Activated naive CD8-positive, alpha-beta T cell treated with anti-CD3 and anti-CD28 coated beads, Interleukin-2, amount 10 ng/mL, durations not matched to agents 7 days and 5 days (primary cell): ENCODE measurements at regions of chr12 and their contacts with region 1.

Region 1: DNA sequence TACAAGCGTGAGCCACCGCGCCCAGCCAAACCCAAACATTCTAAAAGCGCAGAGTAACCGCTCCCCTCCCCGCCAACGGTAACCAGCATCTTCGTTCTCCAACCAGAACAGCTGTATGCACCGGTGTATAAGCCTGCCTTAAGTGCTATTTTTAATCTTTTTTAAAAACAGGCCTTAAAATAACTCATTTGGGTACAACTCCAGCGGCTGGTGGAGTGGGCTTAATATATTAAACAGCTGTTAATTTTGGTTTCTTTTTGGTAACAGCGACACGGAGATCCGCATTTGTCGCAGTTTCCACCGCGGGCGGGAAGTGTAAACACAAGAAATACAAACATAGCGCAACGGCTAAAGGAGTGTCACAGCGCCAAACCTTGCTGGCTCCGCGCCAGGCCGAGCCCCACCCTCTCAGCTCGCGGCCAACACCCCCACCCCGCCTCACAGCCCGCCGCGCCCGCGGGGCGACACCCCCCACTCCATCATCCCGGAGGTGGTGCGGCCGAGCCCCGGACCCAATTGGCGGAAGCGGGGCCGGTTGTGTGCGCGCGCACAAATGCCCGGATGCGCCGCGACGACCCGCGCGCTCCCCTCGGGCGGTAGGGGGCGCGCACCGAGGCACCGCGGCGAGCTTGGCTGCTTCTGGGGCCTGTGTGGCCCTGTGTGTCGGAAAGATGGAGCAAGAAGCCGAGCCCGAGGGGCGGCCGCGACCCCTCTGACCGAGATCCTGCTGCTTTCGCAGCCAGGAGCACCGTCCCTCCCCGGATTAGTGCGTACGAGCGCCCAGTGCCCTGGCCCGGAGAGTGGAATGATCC is at the start of gene MDM2:
- DNase-seq: peak; percentile 99
- ATAC-seq: peak; percentile 92
- H3K4me3 Mint-ChIP-seq: peak within 1 kb of the TSS; percentile 92
- H3K27ac Mint-ChIP-seq: peak within 1 kb of the TSS; percentile 100
- H3K4me1 Mint-ChIP-seq: peaks cover 18% of the 10 kb centered on the region
- H3K27me3 Mint-ChIP-seq: no peaks in the 10 kb centered on the region
- total RNA-seq, gene MDM2: 156 to 169 TPM

Region 2: DNA sequence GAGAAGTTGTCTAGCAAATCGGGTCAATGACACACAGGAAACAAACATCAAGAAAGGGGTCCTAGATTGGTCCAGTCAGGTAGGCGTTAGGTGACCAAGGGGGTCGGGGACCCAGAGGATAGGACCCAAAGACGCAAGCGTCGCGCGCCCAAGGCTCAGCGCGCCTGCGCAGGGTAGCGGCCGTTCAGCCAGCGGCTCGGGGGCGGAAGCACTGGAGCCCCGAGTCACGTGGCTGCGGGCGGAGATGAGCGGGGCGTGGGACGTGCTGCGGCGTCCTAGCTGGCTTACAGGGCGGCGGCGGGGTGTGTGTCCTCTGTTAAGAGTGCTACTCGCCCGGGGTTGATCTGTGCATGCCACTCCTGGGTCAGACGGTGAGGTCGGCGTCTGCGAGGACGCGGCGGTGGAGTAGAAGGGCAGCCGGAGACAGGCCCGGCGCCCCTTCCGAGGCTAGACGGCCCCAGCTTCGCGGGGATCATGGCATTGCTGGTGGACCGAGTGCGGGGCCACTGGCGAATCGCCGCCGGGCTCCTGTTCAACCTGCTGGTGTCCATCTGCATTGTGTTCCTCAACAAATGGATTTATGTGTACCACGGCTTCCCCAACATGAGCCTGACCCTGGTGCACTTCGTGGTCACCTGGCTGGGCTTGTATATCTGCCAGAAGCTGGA is 61.7 kb before region 1 on chr12 and contains the start of gene SLC35E3:
- POLR2A ChIA-PET with region 1: interaction called, 61 read pairs
- DNase-seq: peak; percentile 93
- ATAC-seq: peak; percentile 98
- H3K4me3 Mint-ChIP-seq: peak within 1 kb of the TSS; percentile 95
- H3K27ac Mint-ChIP-seq: peak within 1 kb of the TSS; percentile 85
- H3K4me1 Mint-ChIP-seq: peaks cover 38% of the 10 kb centered on the region
- H3K27me3 Mint-ChIP-seq: no peaks in the 10 kb centered on the region
- total RNA-seq, gene SLC35E3: 8.3 to 9.1 TPM